Ascending aorta (tissue), 2 donors: ENCODE measurements at regions of chr4 and their contacts with region 1.

Region 1: DNA sequence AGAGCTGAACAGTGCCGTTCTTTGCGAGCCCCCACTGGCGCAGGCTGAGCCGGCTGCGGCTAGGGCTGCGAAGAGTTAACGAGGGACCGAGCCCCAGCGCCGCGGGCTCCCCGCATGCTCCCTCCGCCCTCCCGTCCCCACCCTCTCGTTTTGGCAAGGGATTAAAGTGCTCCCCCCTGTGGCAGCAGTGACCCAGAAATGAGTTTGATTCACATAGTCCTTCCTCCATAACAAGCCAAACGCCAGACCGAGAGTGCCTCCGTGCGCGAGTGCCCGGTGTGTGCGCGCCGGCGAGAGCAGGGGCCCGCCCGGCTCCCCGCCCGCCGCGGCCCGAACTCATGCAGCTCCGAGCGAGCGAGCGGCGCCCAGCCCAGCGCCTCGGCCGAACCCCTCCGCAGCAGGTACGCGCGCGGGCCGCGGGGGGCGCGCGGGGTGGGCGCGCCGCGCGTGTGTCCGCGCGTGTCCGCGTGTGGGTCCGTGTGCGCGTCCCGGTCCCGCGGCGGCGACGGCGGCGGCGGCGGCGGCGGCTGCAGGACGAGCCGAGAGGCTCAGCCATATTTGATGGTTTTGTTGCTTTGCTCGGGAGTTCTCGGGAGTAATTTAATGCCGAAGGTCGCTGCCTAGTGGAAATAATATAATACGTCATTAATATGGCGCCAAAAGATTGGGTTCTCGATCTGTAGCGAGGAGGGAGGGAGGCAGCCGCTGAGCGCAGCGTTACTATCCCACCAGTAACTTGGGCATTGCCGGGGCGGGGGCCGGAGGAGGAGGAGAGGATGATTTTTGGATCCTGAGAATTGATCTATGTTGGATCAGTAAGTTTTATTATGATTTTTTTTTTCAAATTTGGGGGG is at the start of gene JADE1:
- DNase-seq: peak; percentile 67 to 96
- H3K4me3 ChIP-seq: peak within 1 kb of the TSS; percentile 79 to 94
- H3K27ac ChIP-seq: peak within 1 kb of the TSS; percentile 91 to 94
- H3K4me1 ChIP-seq: no peaks in the 10 kb centered on the region
- H3K27me3 ChIP-seq: no peaks in the 10 kb centered on the region
- CTCF ChIP-seq: peak; percentile 50 to 65 (median 52)
- total RNA-seq, gene JADE1: 33.8 TPM

Region 2: GRCh38 chr4:128060699-128061565 is 748.8 kb before region 1 on chr4 and contains the start of gene LARP1B:
- intact Hi-C with region 1: loop called (anchors 2 kb)
- DNase-seq: peak; percentile 85 to 97
- H3K4me3 ChIP-seq: peak within 1 kb of the TSS; percentile 62 to 81
- H3K27ac ChIP-seq: peak within 1 kb of the TSS; percentile 93 to 97
- H3K4me1 ChIP-seq: peaks cover 0 to 4% of the 10 kb centered on the region in 2 donors
- H3K27me3 ChIP-seq: no peaks in the 10 kb centered on the region
- CTCF ChIP-seq: no peak
- total RNA-seq, gene LARP1B: 8.6 TPM

Region 3: GRCh38 chr4:128386761-128387599 is 422.7 kb before region 1 on chr4:
- intact Hi-C with region 1: loop called (anchors 5 kb)
- DNase-seq: peak; percentile 63 to 95
- H3K4me3 ChIP-seq: peak overlapping the region in 1 of 2 donors; percentile 38
- H3K27ac ChIP-seq: peak overlapping the region; percentile 58 to 69
- H3K4me1 ChIP-seq: peaks cover 0 to 21% of the 10 kb centered on the region in 2 donors
- H3K27me3 ChIP-seq: no peaks in the 10 kb centered on the region
- CTCF ChIP-seq: no peak

Region 4: DNA sequence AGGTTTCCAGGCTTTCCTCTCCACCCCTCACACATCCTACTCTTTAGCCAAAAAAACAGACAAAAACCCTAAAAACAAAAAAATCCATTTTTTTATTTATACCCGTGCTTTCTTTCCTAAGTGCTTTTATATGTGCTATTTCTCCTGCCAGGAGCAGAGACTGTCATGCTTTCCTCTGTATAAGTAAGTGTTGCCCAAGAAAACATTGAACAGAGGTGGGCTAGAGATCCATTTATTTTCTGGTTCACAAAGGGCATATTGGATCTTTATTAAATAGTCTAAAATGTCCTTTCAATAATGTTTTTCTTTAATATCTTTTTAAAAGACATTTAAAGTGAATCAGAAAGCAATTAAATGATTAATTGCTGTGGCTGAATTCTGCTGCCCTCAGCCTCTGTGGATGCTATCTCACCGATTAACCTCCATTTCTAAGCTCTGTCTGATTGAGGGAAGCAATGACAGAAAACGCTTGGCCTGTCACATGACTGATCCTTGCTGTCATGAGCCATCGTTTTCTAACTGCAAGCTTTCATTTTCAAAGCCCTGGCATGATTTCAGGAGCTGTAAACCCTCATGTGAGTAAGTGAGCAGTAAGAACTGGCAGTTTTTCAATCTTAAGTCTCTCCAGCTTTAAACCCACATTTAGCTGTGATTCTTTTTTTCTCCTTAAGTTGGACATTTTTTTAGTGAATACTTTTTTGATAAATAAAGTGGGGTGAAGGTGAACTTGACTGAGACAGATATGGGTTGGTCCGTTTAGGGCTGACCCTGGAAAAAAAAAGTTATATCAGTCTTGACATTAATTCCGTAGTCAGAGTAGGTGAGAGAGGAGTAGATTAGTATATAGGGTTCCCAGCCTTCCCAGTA is 341.3 kb before region 1 on chr4:
- intact Hi-C with region 1: loop called (anchors 5 kb)
- DNase-seq: peak; percentile 33 to 85
- H3K4me3 ChIP-seq: peak overlapping the region; percentile 22 to 40
- H3K27ac ChIP-seq: peak overlapping the region; percentile 64 to 72
- H3K4me1 ChIP-seq: peaks cover 4 to 10% of the 10 kb centered on the region in 2 donors
- H3K27me3 ChIP-seq: no peaks in the 10 kb centered on the region
- CTCF ChIP-seq: no peak

Region 5: GRCh38 chr4:128565565-128566186 is 244.0 kb before region 1 on chr4:
- intact Hi-C with region 1: loop called (anchors 2 kb)
- DNase-seq: no peak
- H3K4me3 ChIP-seq: no peak overlapping the region
- H3K27ac ChIP-seq: no peak overlapping the region
- H3K4me1 ChIP-seq: no peaks in the 10 kb centered on the region
- H3K27me3 ChIP-seq: no peaks in the 10 kb centered on the region
- CTCF ChIP-seq: peak in 2 of 3 experiments; percentile 22 to 40

Region 6: DNA sequence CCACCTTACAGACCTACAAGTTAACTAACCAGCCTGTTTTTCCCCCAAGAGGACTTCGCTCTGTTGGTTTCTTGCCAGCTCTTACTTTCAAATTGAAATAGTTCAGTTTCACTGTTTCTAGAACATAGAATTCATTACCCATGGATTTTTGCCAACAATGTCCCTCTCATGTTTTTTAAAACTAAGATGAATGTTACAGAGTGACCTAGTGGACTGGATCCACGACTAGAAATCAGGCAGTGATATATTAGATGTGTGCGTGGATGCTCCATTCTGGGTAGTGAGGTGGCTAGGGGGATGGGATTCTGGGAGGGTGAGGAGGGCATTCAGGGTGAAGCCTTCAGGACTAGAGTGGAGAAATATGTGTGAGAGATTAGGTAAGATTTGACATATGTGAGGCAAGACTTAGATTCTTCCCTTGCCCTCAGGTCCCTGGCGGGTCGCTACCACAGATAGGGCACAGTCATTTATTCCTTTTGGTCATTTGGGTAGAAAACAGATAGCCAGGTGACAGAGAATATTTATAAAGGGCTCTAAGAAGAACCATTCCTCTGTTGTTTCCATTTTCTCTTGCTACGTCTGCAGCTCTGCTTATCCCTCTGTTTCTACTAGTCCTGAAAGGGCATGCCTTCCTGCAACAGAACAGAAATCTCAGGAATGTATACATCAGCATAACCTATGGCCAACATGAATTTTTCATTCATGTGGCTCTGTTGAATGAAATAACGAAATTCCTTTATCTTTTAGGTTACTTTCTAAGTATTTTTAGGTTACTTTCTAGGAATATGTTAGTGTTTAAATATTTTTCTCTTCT is 15.6 kb before region 1 on chr4:
- intact Hi-C with region 1: no loop called
- DNase-seq: no peak
- H3K4me3 ChIP-seq: no peak overlapping the region
- H3K27ac ChIP-seq: no peak overlapping the region
- H3K4me1 ChIP-seq: no peaks in the 10 kb centered on the region
- H3K27me3 ChIP-seq: no peaks in the 10 kb centered on the region
- CTCF ChIP-seq: no peak

Region 7: GRCh38 chr4:128820671-128821070 is 11.0 kb after region 1 on chr4:
- intact Hi-C with region 1: loop called (anchors 1 kb)
- DNase-seq: no peak
- H3K4me3 ChIP-seq: no peak overlapping the region
- H3K27ac ChIP-seq: no peak overlapping the region
- H3K4me1 ChIP-seq: peaks cover 0 to 8% of the 10 kb centered on the region in 2 donors
- H3K27me3 ChIP-seq: no peaks in the 10 kb centered on the region
- CTCF ChIP-seq: no peak

Region 8: DNA sequence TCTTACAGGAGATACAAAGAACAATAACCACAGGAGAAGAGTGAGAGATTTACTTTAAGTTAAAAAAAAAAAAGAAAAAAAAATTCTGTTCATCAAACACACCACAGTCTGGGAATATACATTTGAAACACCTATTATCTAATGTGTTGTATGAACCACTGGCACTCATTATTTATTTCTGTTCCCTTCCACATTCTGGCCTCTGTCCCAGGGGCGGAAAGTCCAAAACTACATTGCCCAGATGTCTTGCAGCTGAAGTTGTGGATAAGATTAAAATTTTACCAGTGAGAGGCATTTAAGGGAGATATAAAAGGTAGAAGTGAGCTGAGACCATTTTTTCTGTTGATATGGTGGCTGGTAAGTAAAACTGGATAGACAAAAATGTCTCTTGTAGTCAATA is 227.4 kb after region 1 on chr4:
- intact Hi-C with region 1: no loop called
- DNase-seq: no peak
- H3K4me3 ChIP-seq: no peak overlapping the region
- H3K27ac ChIP-seq: no peak overlapping the region
- H3K4me1 ChIP-seq: no peaks in the 10 kb centered on the region
- H3K27me3 ChIP-seq: no peaks in the 10 kb centered on the region
- CTCF ChIP-seq: no peak

Region 9: DNA sequence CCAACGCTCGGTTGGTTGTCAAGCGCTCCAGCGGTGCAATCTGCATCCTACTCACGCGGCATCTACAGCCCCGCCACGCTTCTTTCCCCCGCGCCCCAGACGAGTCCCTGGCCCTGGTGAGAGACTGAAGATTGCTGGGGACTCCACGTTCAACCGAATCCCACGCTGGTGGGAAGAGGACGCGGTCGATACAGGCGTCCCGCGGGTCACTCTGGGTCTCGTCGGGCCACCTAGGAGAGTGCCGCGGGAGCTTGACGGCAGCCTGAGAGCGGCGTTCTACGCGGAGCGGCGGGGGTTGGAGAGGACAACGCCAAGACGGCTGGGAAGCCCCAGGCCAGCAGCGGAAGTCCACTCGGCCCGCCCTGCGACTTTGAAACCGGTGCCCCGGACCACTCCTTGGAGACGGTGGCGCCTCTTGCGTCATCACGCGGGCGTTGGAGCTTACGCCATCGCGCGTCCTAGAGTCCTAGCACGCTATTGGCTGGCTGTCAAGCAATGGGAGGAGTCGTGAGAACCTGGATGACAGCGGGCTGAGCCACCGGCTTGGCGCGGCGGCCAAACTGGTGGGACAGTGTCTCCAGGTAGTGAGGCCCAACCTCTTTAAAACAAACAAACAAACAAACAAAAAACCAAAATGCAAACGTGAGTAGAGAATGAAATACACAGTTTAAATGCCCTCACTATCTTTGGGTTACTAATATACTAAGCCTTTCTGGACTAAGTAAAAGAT is 283.7 kb after region 1 on chr4 and contains the start of gene SCLT1:
- intact Hi-C with region 1: loop called (anchors 5 kb)
- DNase-seq: peak; percentile 92 to 99
- H3K4me3 ChIP-seq: peak within 1 kb of the TSS; percentile 74 to 75
- H3K27ac ChIP-seq: peak within 1 kb of the TSS; percentile 91 to 92
- H3K4me1 ChIP-seq: peaks cover 0 to 14% of the 10 kb centered on the region in 2 donors
- H3K27me3 ChIP-seq: no peaks in the 10 kb centered on the region
- CTCF ChIP-seq: no peak
- total RNA-seq, gene SCLT1: 7.0 TPM